Activated CD8-positive, alpha-beta T cell treated with anti-CD3 and anti-CD28 coated beads for 36 hours (primary cell): ENCODE measurements at regions of chr17 and their contacts with region 1.

Region 1: DNA sequence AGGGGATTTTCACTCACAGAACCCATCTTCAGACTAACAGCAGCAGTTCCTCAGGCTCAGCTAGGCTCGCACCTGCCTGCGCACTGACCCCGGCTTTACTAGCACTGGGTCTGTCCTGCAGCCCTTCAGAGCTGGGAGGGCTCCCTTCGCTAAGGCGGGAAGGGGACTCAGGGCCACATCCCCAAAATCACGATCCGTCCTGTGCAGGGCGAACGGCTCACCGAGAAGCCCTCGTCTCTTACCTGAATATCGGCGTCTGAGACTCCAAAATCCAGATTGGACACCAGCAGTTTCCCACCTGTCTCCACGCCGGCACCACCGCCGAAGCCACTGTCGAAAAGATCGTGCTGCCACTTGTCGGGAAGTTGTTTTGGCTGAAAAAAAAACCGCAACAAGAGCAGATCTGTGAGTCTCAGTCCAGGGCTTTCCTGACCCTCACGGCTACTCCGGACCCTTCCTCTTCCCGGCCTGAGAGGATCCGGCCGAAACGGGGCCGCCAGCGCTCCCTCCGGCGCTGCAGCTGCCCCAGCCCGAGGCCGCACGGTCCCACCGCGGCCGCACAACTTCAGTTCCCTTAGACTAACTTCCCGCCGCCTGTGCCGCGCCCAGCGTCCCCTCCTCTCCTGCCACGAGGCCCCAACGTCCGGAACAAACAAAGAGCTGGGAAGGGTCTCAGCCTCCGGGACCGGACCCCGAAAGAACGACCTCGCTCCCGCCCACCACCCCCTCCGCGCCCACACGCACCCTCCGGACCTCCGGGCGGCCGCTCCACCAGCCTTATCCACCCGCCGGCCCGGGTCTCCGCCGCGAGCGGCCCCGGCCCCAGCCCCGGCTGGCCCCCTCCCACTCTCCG is 713 bp downstream of the ALYREF start:
- DNase-seq: peak; percentile 41
- ATAC-seq: no peak
- H3K4me3 Mint-ChIP-seq: peak overlapping the region; percentile 85
- H3K27ac Mint-ChIP-seq: peak overlapping the region; percentile 94
- H3K4me1 Mint-ChIP-seq: peaks cover 15% of the 10 kb centered on the region
- H3K27me3 Mint-ChIP-seq: no peaks in the 10 kb centered on the region
- CTCF ChIP-seq: no peak

Region 2: GRCh38 chr17:81879121-81879520 is 11.6 kb before region 1 on chr17:
- CTCF ChIA-PET with region 1: interaction called, 3 read pairs
- POLR2A ChIA-PET with region 1: interaction called, 73 read pairs
- intact Hi-C with region 1: no loop called
- DNase-seq: no peak
- ATAC-seq: no peak
- H3K4me3 Mint-ChIP-seq: no peak overlapping the region
- H3K27ac Mint-ChIP-seq: peak overlapping the region; percentile 52
- H3K4me1 Mint-ChIP-seq: peaks cover 9% of the 10 kb centered on the region
- H3K27me3 Mint-ChIP-seq: no peaks in the 10 kb centered on the region
- CTCF ChIP-seq: no peak

Region 3: DNA sequence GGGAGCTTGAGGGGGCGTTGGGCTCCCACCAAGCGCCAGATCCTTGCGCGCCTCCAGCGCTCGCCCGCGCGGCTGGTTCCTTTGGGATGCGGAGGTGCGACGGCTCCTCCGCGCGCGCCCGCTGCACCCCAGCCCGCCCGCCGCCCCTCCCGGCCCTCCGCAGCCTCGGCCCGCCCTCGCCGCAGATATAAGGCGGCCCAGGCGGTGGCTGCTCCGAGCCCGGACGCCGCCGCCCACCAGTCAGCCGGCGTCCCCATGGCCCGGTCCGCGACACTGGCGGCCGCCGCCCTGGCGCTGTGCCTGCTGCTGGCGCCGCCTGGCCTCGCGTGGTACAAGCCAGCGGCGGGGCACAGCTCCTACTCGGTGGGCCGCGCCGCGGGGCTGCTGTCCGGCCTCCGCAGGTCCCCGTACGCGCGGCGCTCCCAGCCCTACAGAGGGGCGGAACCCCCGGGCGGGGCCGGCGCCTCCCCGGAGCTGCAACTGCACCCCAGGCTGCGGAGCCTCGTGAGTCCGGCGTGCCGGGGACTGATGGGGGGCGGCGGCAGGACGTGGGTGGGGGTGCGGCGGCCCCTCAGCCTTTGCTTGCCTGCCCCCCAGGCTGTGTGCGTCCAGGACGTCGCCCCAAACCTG is 11.5 kb after region 1 on chr17 and contains the start of gene NPB:
- CTCF ChIA-PET with region 1: no interaction called
- POLR2A ChIA-PET with region 1: interaction called, 14 read pairs
- intact Hi-C with region 1: no loop called
- DNase-seq: no peak
- ATAC-seq: peak; percentile 69
- H3K4me3 Mint-ChIP-seq: no peak within 1 kb of the TSS
- H3K27ac Mint-ChIP-seq: no peak within 1 kb of the TSS
- H3K4me1 Mint-ChIP-seq: peaks cover 2% of the 10 kb centered on the region
- H3K27me3 Mint-ChIP-seq: peaks cover 6% of the 10 kb centered on the region
- CTCF ChIP-seq: no peak
- total RNA-seq, gene NPB: 0.18 TPM in 1 of 2 experiments, not detected in the other